ENCODE measurements at regions of chr4 and their contacts with region 1.

Region 1: GRCh38 chr4:15457406-15458201 is 12.1 kb upstream of the CC2D2A start:
- DNase-seq: no peak
- ATAC-seq: peak; percentile 99
- H3K4me3 Mint-ChIP-seq: peak overlapping the region; percentile 21
- H3K27ac Mint-ChIP-seq: peak overlapping the region; percentile 72
- H3K4me1 Mint-ChIP-seq: peaks cover 17% of the 10 kb centered on the region
- H3K27me3 Mint-ChIP-seq: peaks cover 2% of the 10 kb centered on the region
- CTCF ChIP-seq: no peak

Region 2: DNA sequence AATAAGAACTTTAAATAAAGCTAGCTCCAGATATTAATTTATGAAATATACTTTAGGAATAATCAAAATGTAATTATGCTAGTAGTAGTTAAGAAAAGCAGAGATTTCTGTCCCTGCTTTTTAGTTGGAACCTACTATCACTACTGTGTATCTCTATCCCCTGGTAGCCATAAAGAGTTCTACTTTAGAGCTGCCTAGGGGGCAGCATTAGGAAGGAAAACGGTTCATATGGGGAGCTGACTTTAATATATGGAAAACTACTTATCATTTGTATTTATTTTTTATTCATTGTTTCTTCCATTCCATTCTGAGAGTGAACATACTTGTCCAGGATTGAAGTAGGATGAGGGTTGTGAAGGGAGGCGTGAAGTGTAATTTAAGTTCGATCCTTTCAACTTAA is 414.4 kb before region 1 on chr4:
- CTCF ChIA-PET with region 1: no interaction called
- POLR2A ChIA-PET with region 1: no interaction called
- intact Hi-C with region 1: loop called (anchors 10 kb)
- DNase-seq: no peak
- ATAC-seq: no peak
- H3K4me3 Mint-ChIP-seq: no peak overlapping the region
- H3K27ac Mint-ChIP-seq: no peak overlapping the region
- H3K4me1 Mint-ChIP-seq: no peaks in the 10 kb centered on the region
- H3K27me3 Mint-ChIP-seq: no peaks in the 10 kb centered on the region
- CTCF ChIP-seq: no peak

Region 3: GRCh38 chr4:15231265-15232091 is 226.1 kb before region 1 on chr4:
- CTCF ChIA-PET with region 1: interaction called, 92 read pairs
- POLR2A ChIA-PET with region 1: no interaction called
- intact Hi-C with region 1: loop called (anchors 1 kb)
- DNase-seq: peak; percentile 24
- ATAC-seq: peak; percentile 79
- H3K4me3 Mint-ChIP-seq: no peak overlapping the region
- H3K27ac Mint-ChIP-seq: no peak overlapping the region
- H3K4me1 Mint-ChIP-seq: peaks cover 21% of the 10 kb centered on the region
- H3K27me3 Mint-ChIP-seq: peaks cover 2% of the 10 kb centered on the region
- CTCF ChIP-seq: peak; percentile 70

Region 4: GRCh38 chr4:15253201-15253748 is 204.3 kb before region 1 on chr4:
- CTCF ChIA-PET with region 1: interaction called, 13 read pairs
- POLR2A ChIA-PET with region 1: no interaction called
- intact Hi-C with region 1: no loop called
- DNase-seq: no peak
- ATAC-seq: peak; percentile 34
- H3K4me3 Mint-ChIP-seq: no peak overlapping the region
- H3K27ac Mint-ChIP-seq: no peak overlapping the region
- H3K4me1 Mint-ChIP-seq: peaks cover 11% of the 10 kb centered on the region
- H3K27me3 Mint-ChIP-seq: no peaks in the 10 kb centered on the region
- CTCF ChIP-seq: no peak

Region 5: GRCh38 chr4:15410750-15411149 is 46.9 kb before region 1 on chr4:
- CTCF ChIA-PET with region 1: no interaction called
- POLR2A ChIA-PET with region 1: no interaction called
- intact Hi-C with region 1: loop called (anchors 1 kb)
- DNase-seq: no peak
- ATAC-seq: peak; percentile 68
- H3K4me3 Mint-ChIP-seq: peak overlapping the region; percentile 73
- H3K27ac Mint-ChIP-seq: peak overlapping the region; percentile 79
- H3K4me1 Mint-ChIP-seq: peaks cover 67% of the 10 kb centered on the region
- H3K27me3 Mint-ChIP-seq: no peaks in the 10 kb centered on the region
- CTCF ChIP-seq: no peak

Region 6: GRCh38 chr4:16169490-16169889 is 711.9 kb after region 1 on chr4:
- CTCF ChIA-PET with region 1: no interaction called
- POLR2A ChIA-PET with region 1: no interaction called
- intact Hi-C with region 1: no loop called
- DNase-seq: no peak
- ATAC-seq: no peak
- H3K4me3 Mint-ChIP-seq: no peak overlapping the region
- H3K27ac Mint-ChIP-seq: no peak overlapping the region
- H3K4me1 Mint-ChIP-seq: peaks cover 6% of the 10 kb centered on the region
- H3K27me3 Mint-ChIP-seq: no peaks in the 10 kb centered on the region
- CTCF ChIP-seq: no peak

Measured in activated B cell treated with CpG ODN at 0.5 μM for 24 hours (primary cell).